Aorta (tissue), 5 donors: ENCODE measurements at regions of chr17 and their contacts with region 1.

Region 1: GRCh38 chr17:9522074-9522473 is 53.5 kb downstream of the STX8 start:
- DNase-seq: no peak
- ATAC-seq: no peak
- H3K4me3 ChIP-seq: no peak overlapping the region
- H3K27ac ChIP-seq: no peak overlapping the region
- H3K4me1 ChIP-seq: no peaks in the 10 kb centered on the region
- H3K27me3 ChIP-seq: no peaks in the 10 kb centered on the region

Region 2: GRCh38 chr17:8991514-8992285 is 530.4 kb before region 1 on chr17:
- intact Hi-C with region 1: loop called (anchors 2 to 5 kb)
- DNase-seq: peak; percentile 80 to 85
- ATAC-seq: peak; percentile 74
- H3K4me3 ChIP-seq: no peak overlapping the region
- H3K27ac ChIP-seq: no peak overlapping the region
- H3K4me1 ChIP-seq: no peaks in the 10 kb centered on the region
- H3K27me3 ChIP-seq: no peaks in the 10 kb centered on the region

Region 3: DNA sequence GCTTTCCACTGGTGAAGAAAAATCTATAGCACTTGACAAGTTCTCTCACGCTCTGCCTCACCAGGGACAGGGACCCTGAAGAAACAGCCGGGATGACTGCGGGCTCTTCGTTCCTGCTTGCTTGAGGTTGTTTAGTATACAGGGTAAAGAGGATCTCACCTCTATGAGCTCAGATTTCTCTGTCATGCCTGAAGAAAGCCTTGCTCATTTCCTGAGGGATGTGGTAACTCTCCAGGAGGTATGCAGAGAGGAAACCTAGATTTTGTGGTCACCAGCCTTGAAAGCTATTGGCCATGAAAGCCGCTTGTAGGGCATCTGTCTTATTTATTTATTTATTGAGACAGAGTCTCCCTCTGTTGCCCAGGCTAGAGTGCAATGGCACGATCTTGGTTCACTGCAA is 146.4 kb after region 1 on chr17:
- intact Hi-C with region 1: no loop called
- DNase-seq: no peak
- ATAC-seq: no peak
- H3K4me3 ChIP-seq: no peak overlapping the region
- H3K27ac ChIP-seq: no peak overlapping the region
- H3K4me1 ChIP-seq: no peaks in the 10 kb centered on the region
- H3K27me3 ChIP-seq: peaks cover 0 to 2% of the 10 kb centered on the region in 2 donors